ENCODE measurements at regions of chr15 and their contacts with region 1.

Region 1: DNA sequence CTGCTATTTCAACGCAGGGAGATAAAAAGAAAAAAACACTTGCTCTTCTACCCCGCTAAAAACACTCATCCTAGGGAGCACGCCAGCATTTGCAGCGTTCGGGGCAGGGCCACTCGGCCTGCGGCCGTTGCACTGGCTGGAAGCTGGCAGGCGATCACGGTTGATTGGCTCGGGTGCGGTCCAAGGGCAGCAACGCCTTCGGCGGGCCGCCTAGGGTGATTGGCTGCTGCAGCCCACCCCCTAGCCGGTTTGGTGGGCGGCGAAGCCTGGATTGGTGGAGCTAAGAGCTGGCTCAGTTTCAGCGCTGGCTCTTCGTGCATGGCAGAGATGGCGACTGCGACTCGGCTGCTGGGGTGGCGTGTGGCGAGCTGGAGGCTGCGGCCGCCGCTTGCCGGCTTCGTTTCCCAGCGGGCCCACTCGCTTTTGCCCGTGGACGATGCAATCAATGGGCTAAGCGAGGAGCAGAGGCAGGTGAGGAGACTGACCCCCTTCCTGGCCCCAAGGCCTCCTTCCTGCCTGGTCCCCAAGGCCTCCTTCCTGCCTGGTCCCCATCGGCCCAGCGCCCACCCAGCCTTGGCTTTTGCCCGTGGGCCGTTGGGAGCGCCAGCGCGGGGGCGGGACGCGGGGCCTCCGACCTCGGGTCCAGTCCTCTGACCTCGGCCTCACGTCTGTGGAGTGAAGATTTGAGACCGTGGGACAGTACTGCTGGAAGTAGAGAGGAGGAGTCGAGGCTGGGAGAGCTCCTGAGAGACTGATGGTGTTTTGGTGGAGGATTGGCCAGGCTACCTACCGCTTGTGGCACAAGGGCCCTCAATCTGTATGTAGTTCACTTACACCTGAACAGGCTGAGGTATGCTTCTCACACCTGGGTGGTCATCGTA is at the start of gene IVD:
- DNase-seq: peak; percentile 95 to 100 (median 97)

Region 2: DNA sequence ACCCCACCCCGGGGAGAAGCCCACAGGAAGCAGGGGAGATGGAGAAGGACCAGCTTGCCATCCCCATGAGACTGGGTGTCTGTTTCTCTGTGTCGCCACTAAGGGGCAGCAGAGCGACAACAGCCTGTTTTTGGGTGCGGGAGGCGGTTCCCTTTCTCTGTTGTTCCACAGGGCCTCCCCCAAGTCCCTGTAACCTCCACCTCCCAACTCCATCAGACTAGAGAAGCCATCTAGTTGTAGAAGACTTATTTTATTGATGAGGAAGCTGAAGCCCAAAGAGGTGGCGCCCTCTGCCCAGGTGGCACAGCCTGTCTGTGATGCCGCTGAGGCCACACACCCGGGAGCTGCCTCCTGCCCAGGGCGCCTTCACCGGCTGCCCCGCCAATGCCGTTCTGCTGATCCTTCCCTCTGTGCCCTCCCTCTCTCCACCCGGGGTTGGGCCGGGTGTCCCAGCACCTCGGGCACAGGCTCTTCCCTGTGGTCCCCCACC is 61.1 kb before region 1 on chr15:
- intact Hi-C with region 1: loop called (anchors 5 kb)
- DNase-seq: peak in 9 of 10 donors; percentile 68 to 96 (median 75)

Measured in posterior cingulate gyrus (tissue), 11 donors.